ENCODE measurements at regions of chr14 and their contacts with region 1.

Region 1: GRCh38 chr14:36070031-36070719 is 106.3 kb downstream of the PTCSC3 start:
- DNase-seq: peak in 1 of 9 experiments; percentile 3
- ATAC-seq: no peak
- H3K4me3 ChIP-seq: no peak overlapping the region
- H3K4me3 Mint-ChIP-seq: no peak overlapping the region
- H3K27ac ChIP-seq: no peak overlapping the region
- H3K27ac Mint-ChIP-seq: no peak overlapping the region
- H3K4me1 ChIP-seq: no peaks in the 10 kb centered on the region
- H3K4me1 Mint-ChIP-seq: no peaks in the 10 kb centered on the region
- H3K27me3 ChIP-seq: no peaks in the 10 kb centered on the region
- H3K27me3 Mint-ChIP-seq: peaks cover 32% of the 10 kb centered on the region
- CTCF ChIP-seq: no peak

Region 2: GRCh38 chr14:36373982-36374673 is 304.0 kb after region 1 on chr14:
- CTCF ChIA-PET with region 1: no interaction called
- POLR2A ChIA-PET with region 1: no interaction called
- intact Hi-C with region 1: loop called in 1 of 2 experiments (anchors 5 kb)
- DNase-seq: peak; percentile 22 to 75 (median 65)
- ATAC-seq: peak; percentile 80
- H3K4me3 ChIP-seq: no peak overlapping the region
- H3K4me3 Mint-ChIP-seq: no peak overlapping the region
- H3K27ac ChIP-seq: no peak overlapping the region
- H3K27ac Mint-ChIP-seq: no peak overlapping the region
- H3K4me1 ChIP-seq: no peaks in the 10 kb centered on the region
- H3K4me1 Mint-ChIP-seq: no peaks in the 10 kb centered on the region
- H3K27me3 ChIP-seq: no peaks in the 10 kb centered on the region
- H3K27me3 Mint-ChIP-seq: peaks cover 9% of the 10 kb centered on the region
- CTCF ChIP-seq: peak; percentile 75

Measured in CD8-positive, alpha-beta T cell (primary cell).